GM10248 (cell line): ENCODE measurements at regions of chr3 and their contacts with region 1.

Region 1: GRCh38 chr3:66971891-66972551 is 26.1 kb upstream of the KBTBD8 start:
- DNase-seq: peak; percentile 84
- CTCF ChIP-seq: peak; percentile 77

Region 2: DNA sequence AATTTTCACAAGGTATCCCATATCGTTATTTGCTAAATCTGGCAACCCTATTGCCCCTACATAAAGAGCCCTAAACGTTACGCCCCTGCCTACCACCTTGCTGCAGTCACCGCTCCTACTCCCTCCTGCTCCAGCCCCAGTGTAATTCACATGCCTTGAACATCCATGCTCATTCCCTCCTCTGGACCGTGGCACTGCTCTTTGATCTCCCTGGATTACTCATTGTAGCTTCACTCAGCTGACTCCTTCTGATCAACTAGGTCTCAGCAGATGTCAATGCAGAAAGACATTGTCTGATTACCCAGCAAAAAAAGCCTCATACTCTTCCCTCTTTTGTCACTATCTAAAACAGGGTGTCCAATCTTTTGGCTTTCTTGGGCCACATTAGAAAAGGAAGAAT is 14.7 kb before region 1 on chr3:
- CTCF ChIA-PET with region 1: interaction called, 64 read pairs
- POLR2A ChIA-PET with region 1: no interaction called
- DNase-seq: no peak
- CTCF ChIP-seq: no peak

Region 3: DNA sequence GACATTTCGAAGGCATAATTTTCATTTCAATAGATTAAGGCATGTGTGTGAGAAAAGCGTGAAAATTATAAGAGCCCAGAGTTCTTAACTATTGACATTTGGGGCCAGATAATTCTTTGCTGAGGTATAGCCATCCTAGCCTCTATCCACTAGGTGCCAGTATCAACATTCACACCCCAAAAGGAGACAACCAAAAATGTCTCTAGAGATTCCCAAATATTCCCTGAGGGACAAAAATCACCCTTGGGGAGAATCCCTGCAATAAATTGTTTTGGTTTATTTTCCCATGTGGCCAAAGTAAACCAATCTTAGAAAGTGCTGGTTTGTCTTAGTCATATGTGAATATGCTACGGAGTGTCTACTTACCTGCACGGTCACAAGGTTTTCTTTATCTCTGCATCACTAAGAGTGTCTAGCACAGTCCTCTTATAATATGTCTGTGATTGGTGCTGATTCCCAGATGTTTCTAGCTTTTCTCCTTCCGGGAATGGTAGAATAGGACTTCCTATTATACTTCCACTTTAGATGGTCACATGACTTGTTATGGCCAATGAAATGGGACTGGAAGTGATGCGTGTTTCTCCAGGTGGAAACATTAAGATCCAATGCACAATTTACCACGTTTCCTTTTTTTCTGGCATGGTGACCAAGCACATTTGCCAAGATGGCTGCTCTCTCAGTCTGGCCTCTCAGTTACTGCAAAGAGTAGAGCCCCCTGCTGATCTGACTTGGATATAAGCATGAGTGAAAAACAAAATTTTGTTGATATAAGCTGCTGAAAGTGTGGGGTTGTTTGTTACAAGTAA is 18.0 kb after region 1 on chr3:
- CTCF ChIA-PET with region 1: interaction called, 83 read pairs
- POLR2A ChIA-PET with region 1: no interaction called
- DNase-seq: peak; percentile 35
- CTCF ChIP-seq: peak; percentile 58

Region 4: DNA sequence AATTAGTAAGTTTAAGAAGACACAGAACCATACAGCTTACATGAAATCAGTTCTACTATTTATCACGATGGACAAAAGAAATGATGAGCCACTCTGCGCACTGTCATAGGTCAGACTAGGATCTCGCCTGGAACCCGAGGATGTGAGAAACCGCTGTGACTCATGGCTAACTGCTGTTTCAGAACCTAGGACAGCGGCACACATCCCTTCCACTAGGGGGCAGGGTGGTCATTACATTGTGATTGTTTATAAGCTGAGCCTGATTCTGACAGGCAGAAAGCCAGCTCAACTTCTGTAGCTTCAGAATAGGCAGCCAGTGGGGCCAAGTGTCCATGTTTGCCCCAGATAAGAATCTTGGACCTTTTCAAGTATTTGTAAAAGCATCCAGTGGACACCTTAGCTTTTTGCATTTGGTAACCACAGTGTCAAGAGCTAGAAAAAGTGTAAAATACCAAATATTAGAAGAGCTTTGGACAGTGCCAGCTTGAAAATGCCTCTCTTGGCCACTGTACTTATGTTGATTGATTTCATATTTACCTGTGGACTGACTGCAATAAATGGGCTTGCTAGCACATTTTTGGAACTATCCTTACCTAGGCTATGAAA is 141.9 kb after region 1 on chr3:
- CTCF ChIA-PET with region 1: interaction called, 27 read pairs
- POLR2A ChIA-PET with region 1: no interaction called
- DNase-seq: peak; percentile 56
- CTCF ChIP-seq: peak; percentile 97

Region 5: GRCh38 chr3:67346081-67346480 is 374.1 kb after region 1 on chr3:
- CTCF ChIA-PET with region 1: no interaction called
- POLR2A ChIA-PET with region 1: no interaction called
- DNase-seq: no peak
- CTCF ChIP-seq: no peak

Region 6: DNA sequence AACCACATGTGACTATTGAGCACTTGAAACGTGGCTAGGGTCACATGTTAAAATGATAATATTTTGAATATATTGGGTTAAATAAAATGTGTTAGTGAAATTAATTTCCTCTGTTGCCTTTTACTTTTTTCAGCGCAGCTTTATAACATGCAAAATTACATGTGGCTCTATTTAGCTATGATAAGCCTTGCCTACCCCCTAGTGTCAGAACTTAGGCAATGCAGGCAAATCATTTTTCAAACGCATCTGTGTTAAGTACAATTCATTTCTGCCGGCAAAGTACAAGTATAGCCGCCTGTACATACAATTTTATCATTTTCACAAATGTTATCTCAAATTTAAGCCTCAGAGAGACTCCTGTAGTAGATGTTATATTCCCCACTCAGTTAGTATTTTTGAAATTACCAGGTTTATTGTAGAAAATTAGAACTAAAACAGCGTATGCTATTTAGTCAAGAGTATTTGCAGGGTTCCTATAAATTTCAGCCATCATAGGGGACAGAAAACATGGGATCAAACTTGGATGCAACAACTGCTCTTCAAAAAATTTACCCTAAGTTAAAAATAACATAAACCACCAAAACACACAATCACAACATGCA is 1904.2 kb after region 1 on chr3:
- CTCF ChIA-PET with region 1: interaction called, 13 read pairs
- POLR2A ChIA-PET with region 1: no interaction called
- DNase-seq: peak; percentile 18
- CTCF ChIP-seq: peak; percentile 76